ENCODE measurements at regions of chr6 and their contacts with region 1.

Region 1: DNA sequence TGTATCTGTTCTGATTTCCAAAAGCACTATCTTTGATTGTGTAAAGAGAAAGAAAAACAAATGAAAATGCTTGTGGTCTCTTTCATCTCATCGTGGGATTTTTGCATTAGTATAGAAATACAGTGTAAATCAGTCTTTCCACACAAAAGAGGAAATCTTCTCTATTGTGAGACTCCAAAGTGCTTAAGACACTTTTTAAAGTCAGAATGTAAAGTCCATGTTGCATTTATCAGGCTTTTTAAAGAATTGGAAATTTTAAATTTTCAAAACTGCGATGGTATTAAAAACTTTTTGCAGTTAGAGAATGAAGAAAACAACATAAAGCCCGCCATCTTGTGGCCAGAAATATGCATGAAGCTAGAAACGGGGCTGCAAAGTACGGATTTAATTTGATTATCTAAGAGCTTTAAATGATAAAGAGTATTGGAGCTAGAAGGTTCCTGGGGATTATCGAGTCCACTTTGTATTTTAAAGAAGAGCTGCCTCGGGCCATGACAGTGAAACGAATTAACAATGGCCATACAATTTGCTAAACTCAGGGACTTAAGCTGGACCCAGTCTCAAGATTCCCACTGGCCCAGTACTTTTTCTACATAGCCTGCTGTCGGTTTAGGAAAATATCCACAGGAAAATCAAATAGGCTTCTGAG is 339.6 kb downstream of the ARHGAP18 start:
- DNase-seq: peak in 40 of 42 donors; percentile 13 to 91 (median 70)

Region 2: DNA sequence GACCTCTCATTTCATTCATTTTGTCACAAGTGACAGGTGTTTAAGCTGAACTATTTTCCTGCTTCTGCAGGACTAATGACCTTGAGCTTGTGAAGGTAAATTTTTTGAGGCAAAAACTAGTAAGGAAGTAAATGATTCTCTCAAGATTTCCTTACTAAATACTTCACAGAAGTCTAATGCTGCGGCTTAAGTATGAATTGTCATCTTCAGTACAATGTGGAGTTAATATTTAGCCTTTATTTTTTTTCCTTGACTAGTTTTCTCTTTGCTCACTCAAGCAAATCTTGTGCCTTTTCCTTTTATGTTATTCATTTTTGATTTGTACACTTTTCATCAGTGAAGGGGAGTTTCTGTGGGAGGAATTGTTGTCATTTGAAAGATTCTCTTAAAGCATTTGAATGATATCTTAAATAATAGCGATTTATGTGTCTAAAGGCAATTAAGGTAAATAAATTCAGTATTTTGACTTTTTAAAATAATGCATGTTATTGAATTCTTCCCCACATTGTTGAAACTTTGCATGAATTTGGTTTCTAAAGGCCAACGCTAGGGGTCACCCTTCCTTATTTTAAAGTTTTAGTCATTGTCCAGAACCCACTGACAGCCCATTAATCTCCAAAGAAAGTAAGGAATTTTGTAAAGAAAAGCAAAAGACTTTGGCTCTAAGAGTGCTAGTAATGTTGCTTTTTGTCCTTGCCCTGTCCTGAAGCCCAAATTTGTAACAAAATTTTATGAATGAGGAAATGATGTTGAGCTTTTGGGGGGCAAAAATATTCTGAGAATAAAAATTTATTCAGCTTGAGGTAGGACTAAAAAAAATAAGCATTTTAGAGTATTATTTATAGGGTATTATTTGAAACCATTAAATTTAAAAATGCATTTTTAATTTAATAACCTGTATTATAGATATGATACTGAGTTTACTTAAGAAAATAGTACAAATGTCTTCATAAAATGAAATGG is 644.8 kb before region 1 on chr6:
- intact Hi-C with region 1: loop called (anchors 10 kb)
- DNase-seq: peak in 20 of 42 donors; percentile 6 to 79 (median 40)